ENCODE measurements at regions of chr2 and their contacts with region 1.

Region 1: GRCh38 chr2:45494269-45494977 is 116.6 kb downstream of the SRBD1 start:
- DNase-seq: no peak

Region 2: DNA sequence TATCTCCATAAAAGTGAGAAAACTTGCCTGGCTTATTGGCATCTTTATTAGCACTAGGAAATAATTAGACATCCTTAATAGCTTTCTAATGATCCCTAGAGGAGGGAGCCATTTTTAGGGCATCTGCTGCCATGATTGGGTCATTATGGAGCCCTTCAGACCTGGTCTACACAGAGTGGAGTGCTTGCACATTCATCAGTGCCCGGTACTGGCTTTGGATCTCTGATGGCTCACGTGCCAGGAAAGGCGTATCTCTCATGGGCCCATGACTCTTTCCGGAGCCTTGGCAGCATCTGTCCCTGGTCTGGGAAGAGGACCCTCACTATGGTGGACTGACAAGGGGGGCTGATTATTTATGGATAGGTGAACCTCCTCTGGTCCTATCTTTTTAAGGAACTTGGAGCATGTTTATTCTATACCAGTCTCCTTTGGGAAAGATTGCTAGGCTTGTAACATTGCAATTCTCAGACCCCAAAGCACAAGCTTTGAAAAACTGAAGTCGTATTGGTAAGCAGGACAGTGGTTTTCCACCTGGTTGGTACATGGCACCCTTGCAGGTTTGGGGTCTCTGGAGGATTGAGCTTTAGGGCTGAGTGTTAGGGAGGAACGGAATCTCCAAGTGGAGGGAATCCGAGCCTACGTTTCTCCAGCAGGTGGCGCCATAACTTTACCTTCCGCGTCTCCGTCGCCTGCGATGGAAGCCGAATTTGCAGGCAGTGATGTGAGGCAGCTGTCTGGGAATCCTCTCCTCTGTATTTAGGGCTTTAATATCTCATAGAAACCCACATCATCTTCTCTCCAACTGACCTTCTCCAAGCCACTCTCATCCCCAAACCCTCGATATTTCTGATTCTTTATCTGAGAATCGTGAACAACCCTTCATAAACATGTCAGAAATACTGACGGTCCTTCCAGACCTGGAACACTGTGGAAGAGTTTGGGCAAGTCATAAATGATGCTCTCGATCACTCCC is 513.0 kb before region 1 on chr2:
- intact Hi-C with region 1: loop called (anchors 5 kb)
- DNase-seq: peak; percentile 92

Region 3: DNA sequence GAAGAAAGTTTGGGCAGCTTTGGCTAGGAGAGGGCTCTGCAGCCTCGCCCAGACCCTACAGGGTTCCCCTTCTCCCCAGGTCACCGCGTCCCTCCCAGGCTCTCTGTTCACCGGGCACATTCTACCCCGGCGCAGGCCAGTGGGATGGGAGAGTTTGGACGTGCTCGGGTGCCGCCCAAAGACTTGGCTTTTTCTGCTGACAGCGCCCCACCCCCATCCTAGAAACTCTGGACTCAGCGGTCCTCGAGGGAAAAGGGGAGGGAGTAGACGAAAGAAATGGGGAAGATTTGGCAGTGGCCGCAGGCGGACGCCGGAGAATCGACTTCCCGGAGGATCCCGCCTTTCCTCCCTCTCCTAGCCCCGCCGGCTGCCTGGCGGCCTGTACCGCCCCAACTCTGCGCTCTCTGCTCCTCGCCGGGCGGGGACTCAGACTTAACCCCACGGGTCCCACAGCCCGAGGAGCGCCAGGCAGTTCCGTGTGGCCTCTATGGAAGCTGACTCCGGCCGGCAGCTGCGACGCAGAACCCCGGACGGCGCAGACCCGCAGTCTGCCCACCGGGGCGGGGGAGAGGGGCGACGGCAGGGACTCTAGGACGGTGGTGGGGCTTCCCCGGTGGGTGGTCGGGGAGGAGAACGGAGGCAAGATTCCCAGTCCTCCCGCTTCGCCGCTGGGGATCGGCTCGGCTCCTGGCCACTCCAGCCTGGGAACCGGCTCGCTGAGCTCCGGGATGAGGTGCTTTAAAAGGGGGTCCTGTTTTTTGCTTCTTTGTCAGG is 484.3 kb before region 1 on chr2:
- intact Hi-C with region 1: loop called in 1 of 2 experiments (anchors 1 kb)
- DNase-seq: peak; percentile 96

Region 4: DNA sequence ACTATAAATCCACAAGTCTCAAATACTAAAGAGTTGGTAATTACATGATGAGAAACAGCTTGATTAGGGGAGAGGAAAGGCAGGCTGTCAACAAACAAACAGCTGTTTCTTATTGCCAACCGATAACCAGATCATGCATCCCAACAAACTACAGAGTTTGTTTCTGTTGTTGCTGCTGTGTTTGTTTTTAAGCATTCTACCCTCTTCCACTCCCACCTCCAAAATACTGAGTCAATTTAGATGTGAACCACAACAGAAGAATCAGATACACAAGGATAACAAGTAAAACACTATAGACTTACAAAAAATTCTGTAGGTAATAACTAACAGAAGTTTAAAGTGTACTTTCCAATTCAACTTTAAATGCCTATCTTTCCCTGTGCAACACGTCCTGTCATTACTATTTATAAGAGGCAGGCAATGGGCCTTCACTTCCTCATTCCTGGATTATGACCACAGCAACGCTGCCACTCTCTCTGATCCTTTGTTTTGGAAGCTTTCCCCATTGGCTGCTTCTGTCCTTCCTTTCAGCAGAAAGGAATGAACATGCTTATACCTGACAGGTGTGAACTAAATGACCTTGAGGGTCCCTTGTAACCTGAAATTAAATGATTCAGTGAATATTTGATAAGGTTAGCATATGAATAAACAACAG is 35.4 kb before region 1 on chr2:
- intact Hi-C with region 1: no loop called
- DNase-seq: no peak

Measured in posterior vena cava (tissue), 2 donors.